ENCODE measurements at regions of chr5 and their contacts with region 1.

Region 1: DNA sequence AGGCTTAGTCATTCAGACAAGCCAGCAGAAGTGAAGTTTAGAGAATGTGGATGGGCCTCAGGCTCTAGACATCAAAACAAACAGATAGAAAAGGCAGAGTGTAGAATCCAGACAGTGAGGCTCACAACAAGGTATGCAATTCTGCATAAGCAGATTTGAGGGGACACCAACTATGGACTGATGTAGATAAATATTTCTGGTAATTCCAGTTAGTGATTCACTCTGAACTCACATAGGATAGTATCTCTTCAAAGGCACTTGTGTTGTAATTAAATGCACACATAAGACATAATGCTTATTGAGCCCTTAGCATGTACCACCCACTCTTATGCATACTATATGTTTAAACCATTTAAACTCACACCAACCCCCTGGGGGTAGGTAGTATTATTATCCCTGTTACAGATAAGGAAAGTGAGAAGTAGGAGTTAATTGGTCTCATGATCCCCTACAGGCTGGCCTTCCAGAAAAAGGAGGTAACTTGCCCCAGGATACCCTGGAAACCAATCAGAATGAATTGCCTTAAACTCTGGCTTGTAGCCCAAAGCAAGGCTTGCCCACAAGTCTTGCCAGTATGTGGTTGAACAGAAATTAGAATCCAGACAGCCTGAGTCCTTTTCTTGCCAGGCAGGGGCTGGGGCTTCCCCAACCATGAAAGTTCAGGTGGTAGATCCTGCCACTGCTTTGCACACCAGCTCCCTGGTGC is 39.5 kb upstream of the HSPB3 start:
- DNase-seq: peak; percentile 75
- H3K4me3 ChIP-seq: no peak overlapping the region
- CTCF ChIP-seq: no peak

Region 2: GRCh38 chr5:53814819-53815218 is 601.2 kb before region 1 on chr5:
- CTCF ChIA-PET with region 1: no interaction called
- POLR2A ChIA-PET with region 1: no interaction called
- DNase-seq: no peak
- H3K4me3 ChIP-seq: no peak overlapping the region
- CTCF ChIP-seq: no peak

Region 3: GRCh38 chr5:54243473-54244080 is 172.5 kb before region 1 on chr5:
- CTCF ChIA-PET with region 1: interaction called, 62 read pairs
- POLR2A ChIA-PET with region 1: no interaction called
- DNase-seq: no peak
- H3K4me3 ChIP-seq: no peak overlapping the region
- CTCF ChIP-seq: peak; percentile 53

Region 4: DNA sequence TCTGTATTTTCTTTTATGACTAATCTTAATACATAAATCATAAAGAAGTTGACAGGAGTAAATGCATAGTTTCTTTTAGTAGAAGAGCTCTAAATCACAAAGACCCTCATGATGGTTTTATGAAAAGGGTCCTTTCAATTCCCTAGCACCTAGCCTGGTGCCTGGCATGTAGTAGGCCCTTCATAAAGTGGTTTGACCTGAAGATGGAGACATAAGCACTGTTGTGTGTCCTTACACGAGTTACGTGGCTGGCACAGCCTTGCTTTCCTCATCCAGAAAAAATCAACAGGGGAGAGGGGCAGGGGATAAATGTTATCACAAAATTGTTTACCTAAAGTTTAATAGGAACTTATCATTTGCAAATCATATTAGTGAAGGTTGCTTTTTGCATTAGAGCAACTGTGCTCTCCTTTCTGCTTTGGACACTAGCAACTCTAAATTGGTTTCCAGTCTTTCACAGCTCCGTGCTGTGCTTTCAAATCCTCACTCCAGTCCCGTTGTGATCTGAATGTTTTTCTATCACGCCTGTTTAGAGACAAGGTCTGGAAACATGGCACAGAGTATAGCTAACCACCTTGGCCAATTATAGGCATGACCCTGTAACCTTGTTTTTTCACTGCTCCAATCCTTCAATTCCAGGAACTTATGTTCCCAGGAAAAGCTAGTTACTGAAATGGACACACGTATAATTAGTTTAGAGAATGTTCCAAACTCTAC is 161.4 kb before region 1 on chr5:
- CTCF ChIA-PET with region 1: interaction called, 20 read pairs
- POLR2A ChIA-PET with region 1: no interaction called
- DNase-seq: no peak
- H3K4me3 ChIP-seq: no peak overlapping the region
- CTCF ChIP-seq: no peak

Region 5: GRCh38 chr5:54401515-54401914 is 14.5 kb before region 1 on chr5:
- CTCF ChIA-PET with region 1: interaction called, 17 read pairs
- POLR2A ChIA-PET with region 1: no interaction called
- DNase-seq: no peak
- H3K4me3 ChIP-seq: no peak overlapping the region
- CTCF ChIP-seq: no peak

Region 6: DNA sequence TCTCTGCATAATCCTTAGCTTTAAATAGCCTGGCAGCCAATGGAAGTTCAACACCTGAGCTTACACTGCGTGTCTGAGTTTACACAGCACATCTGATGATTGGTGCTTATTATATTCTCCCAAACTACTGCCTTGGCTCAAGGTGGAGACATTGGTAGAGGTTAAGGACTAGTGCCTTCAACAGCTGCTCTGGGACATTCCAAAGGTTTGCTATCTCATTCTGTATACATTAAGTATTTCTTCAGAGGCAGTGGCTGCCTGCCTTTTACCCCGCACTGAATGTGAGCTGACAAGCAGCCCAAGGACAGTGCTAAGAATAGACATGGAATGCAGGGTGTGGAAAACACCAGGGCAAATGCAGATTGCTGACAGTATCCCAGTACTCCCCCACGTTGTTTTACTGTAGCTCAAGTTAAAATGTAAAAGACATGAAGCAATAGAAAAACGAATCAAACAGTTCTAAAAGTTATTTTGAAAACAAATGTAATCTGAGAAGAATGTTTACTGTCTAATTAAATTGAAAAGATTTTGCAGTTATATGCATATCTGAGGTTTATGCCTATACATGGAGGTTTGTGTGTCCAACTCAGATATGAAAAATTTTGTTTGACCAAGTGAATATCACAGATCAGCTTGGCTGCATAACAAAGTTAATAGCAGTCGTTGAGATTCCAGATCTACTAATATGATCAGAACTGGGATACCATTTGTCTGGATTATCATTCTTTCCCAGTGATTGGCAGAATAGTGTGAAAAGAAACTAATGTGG is 41.2 kb after region 1 on chr5:
- CTCF ChIA-PET with region 1: interaction called, 10 read pairs
- POLR2A ChIA-PET with region 1: no interaction called
- DNase-seq: peak; percentile 84
- H3K4me3 ChIP-seq: peak overlapping the region; percentile 32
- CTCF ChIP-seq: no peak